ENCODE measurements at regions of chr2 and their contacts with region 1.

Region 1: GRCh38 chr2:84649487-84650142 is 133.3 kb downstream of the DNAH6 start:
- DNase-seq: no peak
- H3K4me3 Mint-ChIP-seq: peak overlapping the region; percentile 0
- H3K27ac Mint-ChIP-seq: peak overlapping the region; percentile 60
- H3K4me1 Mint-ChIP-seq: peaks cover 75% of the 10 kb centered on the region
- H3K27me3 Mint-ChIP-seq: no peaks in the 10 kb centered on the region

Region 2: GRCh38 chr2:84526562-84526961 is 123.1 kb before region 1 on chr2:
- CTCF ChIA-PET with region 1: no interaction called
- intact Hi-C with region 1: no loop called
- DNase-seq: no peak
- H3K4me3 Mint-ChIP-seq: no peak overlapping the region
- H3K27ac Mint-ChIP-seq: peak overlapping the region; percentile 50
- H3K4me1 Mint-ChIP-seq: peaks cover 17% of the 10 kb centered on the region
- H3K27me3 Mint-ChIP-seq: no peaks in the 10 kb centered on the region

Region 3: DNA sequence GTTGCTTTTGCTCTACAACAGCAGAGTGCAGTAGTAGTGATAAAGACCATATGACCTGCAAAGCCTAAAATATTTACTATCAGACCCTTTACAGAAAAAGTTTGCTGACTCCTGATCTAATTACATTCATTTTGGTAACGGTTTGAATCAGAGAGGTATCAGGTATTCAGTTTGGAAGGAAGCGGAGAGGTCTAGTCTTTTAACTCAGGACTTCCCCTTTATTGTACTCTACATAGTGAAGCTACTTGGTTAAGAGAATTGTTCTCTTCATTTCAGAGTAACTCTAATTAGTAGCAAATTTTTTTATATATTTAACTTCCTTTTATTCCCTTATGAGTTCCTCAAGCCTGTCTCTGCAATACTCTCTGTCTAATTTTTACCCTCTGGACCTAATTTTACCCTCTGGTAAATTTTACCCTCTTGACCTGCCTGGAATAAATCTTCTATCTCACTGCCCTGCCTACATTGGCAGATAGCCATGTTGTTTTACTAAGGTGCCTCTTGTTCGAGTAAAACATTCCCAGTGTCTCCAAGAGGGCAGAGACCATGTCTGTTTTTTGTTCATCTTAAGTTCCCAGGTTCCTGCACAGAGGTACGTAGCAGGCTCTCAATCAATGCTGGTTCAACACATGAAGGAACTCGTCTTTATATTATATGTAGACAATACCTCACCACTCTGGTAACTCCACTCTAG is 37.3 kb after region 1 on chr2:
- CTCF ChIA-PET with region 1: no interaction called
- intact Hi-C with region 1: loop called (anchors 1 kb)
- DNase-seq: no peak
- H3K4me3 Mint-ChIP-seq: no peak overlapping the region
- H3K27ac Mint-ChIP-seq: no peak overlapping the region
- H3K4me1 Mint-ChIP-seq: peaks cover 37% of the 10 kb centered on the region
- H3K27me3 Mint-ChIP-seq: no peaks in the 10 kb centered on the region

Region 4: DNA sequence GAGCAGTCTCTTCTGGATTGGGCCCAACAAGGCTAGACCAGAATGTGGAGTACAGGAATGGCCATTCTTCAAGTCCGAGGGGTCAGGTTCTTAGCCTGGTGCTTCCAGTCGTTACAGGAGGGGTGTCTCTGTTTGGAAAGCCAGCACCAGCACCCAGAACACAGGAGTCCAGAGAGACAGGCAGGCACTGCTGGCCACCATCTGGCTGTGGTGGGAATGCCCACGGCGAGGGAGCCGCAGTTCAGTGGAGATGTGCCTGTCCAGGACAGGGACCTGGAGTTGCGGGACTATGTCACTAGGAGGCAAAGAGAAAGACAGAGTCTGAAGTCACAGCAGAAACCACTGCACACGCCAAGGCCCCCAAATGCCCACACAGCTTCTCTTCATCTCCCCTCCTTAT is 172.2 kb after region 1 on chr2:
- CTCF ChIA-PET with region 1: no interaction called
- intact Hi-C with region 1: no loop called
- DNase-seq: no peak
- H3K4me3 Mint-ChIP-seq: no peak overlapping the region
- H3K27ac Mint-ChIP-seq: no peak overlapping the region
- H3K4me1 Mint-ChIP-seq: peaks cover 34% of the 10 kb centered on the region
- H3K27me3 Mint-ChIP-seq: no peaks in the 10 kb centered on the region

Region 5: GRCh38 chr2:84991404-84992151 is 342.0 kb after region 1 on chr2:
- CTCF ChIA-PET with region 1: no interaction called
- intact Hi-C with region 1: no loop called
- DNase-seq: no peak
- H3K4me3 Mint-ChIP-seq: no peak overlapping the region
- H3K27ac Mint-ChIP-seq: no peak overlapping the region
- H3K4me1 Mint-ChIP-seq: peaks cover 46% of the 10 kb centered on the region
- H3K27me3 Mint-ChIP-seq: no peaks in the 10 kb centered on the region